ENCODE measurements at regions of chr12 and their contacts with region 1.

Region 1: GRCh38 chr12:47904713-47905310 is at the start of gene VDR:
- DNase-seq: peak; percentile 42 to 76 (median 64)
- ATAC-seq: peak; percentile 86
- H3K4me3 ChIP-seq: peak within 1 kb of the TSS; percentile 73
- H3K4me3 Mint-ChIP-seq: peak within 1 kb of the TSS; percentile 86 to 98 (median 94)
- H3K27ac ChIP-seq: peak within 1 kb of the TSS; percentile 44
- H3K27ac Mint-ChIP-seq: peak within 1 kb of the TSS; percentile 51 to 88 (median 74)
- H3K4me1 ChIP-seq: peaks cover 25 to 41% of the 10 kb centered on the region in 2 donors
- H3K4me1 Mint-ChIP-seq: peaks cover 35 to 57% (median 47%) of the 10 kb centered on the region in 7 donors
- H3K27me3 ChIP-seq: no peaks in the 10 kb centered on the region
- H3K27me3 Mint-ChIP-seq: peaks cover 0 to 34% (median 0%) of the 10 kb centered on the region in 5 donors
- total RNA-seq, gene VDR: 1.6 to 82.6 (median 2.9) TPM

Region 2: GRCh38 chr12:47085815-47086252 is 819.0 kb before region 1 on chr12:
- CTCF ChIA-PET with region 1: no interaction called
- POLR2A ChIA-PET with region 1: no interaction called
- intact Hi-C with region 1: loop called in 1 of 2 experiments (anchors 1 kb)
- DNase-seq: peak in 5 of 9 donors; percentile 26 to 54 (median 32)
- ATAC-seq: peak; percentile 85
- H3K4me3 ChIP-seq: peak overlapping the region; percentile 3
- H3K4me3 Mint-ChIP-seq: peak overlapping the region in 9 of 10 donors; percentile 8 to 85 (median 30)
- H3K27ac ChIP-seq: no peak overlapping the region
- H3K27ac Mint-ChIP-seq: peak overlapping the region; percentile 8 to 99 (median 81)
- H3K4me1 ChIP-seq: peaks cover 38 to 42% of the 10 kb centered on the region in 2 donors
- H3K4me1 Mint-ChIP-seq: peaks cover 42 to 74% (median 61%) of the 10 kb centered on the region in 7 donors
- H3K27me3 ChIP-seq: no peaks in the 10 kb centered on the region
- H3K27me3 Mint-ChIP-seq: no peaks in the 10 kb centered on the region

Region 3: DNA sequence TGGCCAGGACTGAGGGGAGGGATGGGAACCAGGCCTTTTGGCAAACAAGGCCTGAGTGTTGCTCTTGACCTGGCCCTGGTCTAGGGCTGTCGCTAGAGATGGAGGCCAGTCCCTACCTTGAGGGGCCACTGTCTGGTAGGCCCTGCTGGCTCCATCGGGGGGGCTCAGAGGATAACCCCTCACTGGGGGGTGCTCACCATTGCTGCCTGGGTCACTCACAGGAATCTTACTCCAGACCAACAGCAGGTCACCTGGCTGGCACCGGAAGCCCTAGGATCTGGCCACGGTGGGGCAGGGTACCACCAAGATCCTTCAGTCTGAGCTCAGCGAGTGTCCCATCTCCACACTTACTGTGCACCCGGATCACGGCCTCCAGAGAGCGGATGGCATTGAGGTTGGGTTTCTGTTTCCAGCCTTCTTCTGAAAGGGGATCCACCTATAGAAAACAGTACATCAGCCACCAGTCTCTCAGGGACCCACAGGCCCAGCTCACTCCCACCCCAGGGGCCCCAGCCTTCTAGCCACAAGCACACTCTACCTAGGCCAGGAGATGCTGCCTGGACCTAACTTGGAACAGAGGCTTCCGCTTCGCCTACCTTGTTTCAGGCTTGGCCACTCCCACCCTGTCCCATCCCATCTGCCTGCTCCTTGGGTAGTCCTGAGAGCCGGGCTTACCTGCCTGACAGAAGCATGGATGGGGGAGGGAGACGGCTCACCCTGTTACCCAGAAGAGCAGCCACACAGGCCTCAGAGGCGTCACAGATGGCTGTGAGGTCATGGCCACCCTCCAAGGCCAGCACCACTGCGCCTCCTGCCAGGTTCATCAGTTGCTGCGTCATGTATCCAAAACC is 119.6 kb before region 1 on chr12:
- CTCF ChIA-PET with region 1: no interaction called
- POLR2A ChIA-PET with region 1: no interaction called
- intact Hi-C with region 1: no loop called
- DNase-seq: no peak
- ATAC-seq: no peak
- H3K4me3 ChIP-seq: no peak overlapping the region
- H3K4me3 Mint-ChIP-seq: no peak overlapping the region
- H3K27ac ChIP-seq: no peak overlapping the region
- H3K27ac Mint-ChIP-seq: peak overlapping the region in 5 of 9 donors; percentile 31 to 82 (median 54)
- H3K4me1 ChIP-seq: no peaks in the 10 kb centered on the region
- H3K4me1 Mint-ChIP-seq: peaks cover 4 to 15% (median 6%) of the 10 kb centered on the region in 7 donors
- H3K27me3 ChIP-seq: no peaks in the 10 kb centered on the region
- H3K27me3 Mint-ChIP-seq: no peaks in the 10 kb centered on the region

Region 4: DNA sequence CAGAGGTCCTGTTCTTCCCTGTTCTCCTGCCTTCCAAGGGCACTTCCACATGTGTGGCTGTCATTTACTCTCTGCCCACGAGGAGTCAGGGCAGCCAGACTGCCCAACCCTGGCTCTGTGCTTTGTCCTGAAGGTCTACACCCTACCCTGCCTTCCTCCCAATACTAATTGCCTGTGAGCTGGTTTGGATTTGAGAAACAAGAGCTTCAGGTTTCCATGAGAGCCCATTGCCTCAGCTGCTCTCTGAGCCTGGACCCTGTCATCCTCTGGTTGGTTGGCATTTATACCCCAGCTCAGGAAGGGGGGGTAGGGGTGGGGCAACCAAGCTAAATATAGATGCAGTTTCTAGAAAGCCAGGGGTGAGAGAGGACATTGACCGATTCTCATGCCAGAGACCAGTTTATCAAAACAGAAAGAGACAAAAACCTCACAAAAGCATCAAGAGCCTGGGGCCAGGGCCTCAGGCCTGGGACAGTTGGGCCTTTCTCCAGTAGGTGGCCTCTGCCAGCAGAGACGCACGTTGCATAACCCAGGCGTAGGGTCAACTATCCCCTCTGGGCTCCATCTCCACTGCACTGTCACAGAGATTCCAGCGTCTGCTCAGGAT is 34.5 kb before region 1 on chr12:
- CTCF ChIA-PET with region 1: interaction called, 4 read pairs
- POLR2A ChIA-PET with region 1: no interaction called
- intact Hi-C with region 1: loop called in 1 of 2 experiments (anchors 2 kb)
- DNase-seq: no peak
- ATAC-seq: peak; percentile 51
- H3K4me3 ChIP-seq: no peak overlapping the region
- H3K4me3 Mint-ChIP-seq: peak overlapping the region in 1 of 10 donors; percentile 49
- H3K27ac ChIP-seq: no peak overlapping the region
- H3K27ac Mint-ChIP-seq: peak overlapping the region in 1 of 9 donors; percentile 84
- H3K4me1 ChIP-seq: no peaks in the 10 kb centered on the region
- H3K4me1 Mint-ChIP-seq: peaks cover 0 to 85% (median 0%) of the 10 kb centered on the region in 7 donors
- H3K27me3 ChIP-seq: no peaks in the 10 kb centered on the region
- H3K27me3 Mint-ChIP-seq: no peaks in the 10 kb centered on the region

Region 5: GRCh38 chr12:47882781-47883546 is 21.8 kb before region 1 on chr12:
- CTCF ChIA-PET with region 1: interaction called, 6 read pairs
- POLR2A ChIA-PET with region 1: interaction called, 13 read pairs
- intact Hi-C with region 1: loop called (anchors 1 kb)
- DNase-seq: peak in 7 of 9 donors; percentile 30 to 60 (median 55)
- ATAC-seq: peak; percentile 71
- H3K4me3 ChIP-seq: peak overlapping the region; percentile 73
- H3K4me3 Mint-ChIP-seq: peak overlapping the region; percentile 84 to 95 (median 90)
- H3K27ac ChIP-seq: peak overlapping the region; percentile 50
- H3K27ac Mint-ChIP-seq: peak overlapping the region; percentile 72 to 99 (median 95)
- H3K4me1 ChIP-seq: peaks cover 14 to 38% of the 10 kb centered on the region in 2 donors
- H3K4me1 Mint-ChIP-seq: peaks cover 33 to 82% (median 54%) of the 10 kb centered on the region in 7 donors
- H3K27me3 ChIP-seq: no peaks in the 10 kb centered on the region
- H3K27me3 Mint-ChIP-seq: no peaks in the 10 kb centered on the region

Region 6: DNA sequence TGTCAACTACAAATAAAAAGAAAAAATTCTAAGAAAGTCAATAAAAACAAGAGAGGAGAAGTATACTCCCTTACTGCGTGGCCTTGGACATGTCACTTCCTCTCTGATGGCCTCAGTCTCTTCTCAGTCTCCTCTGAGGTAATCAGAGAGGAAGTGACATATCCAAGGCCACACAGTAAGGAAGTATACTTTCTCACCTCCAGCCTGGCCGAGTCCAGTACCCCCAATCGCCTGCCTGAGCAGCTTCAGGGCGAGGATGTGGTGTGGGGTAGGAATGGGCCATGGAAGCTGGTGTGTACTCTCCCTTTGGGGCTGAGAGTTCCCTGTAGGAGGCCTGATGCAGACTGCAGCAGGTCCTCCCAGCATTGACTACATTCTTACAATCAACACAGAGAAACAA is 15.8 kb before region 1 on chr12:
- CTCF ChIA-PET with region 1: interaction called, 12 read pairs
- POLR2A ChIA-PET with region 1: interaction called, 13 read pairs
- intact Hi-C with region 1: loop called in 1 of 2 experiments (anchors 1 kb)
- DNase-seq: peak in 2 of 9 donors; percentile 21 to 46
- ATAC-seq: peak; percentile 87
- H3K4me3 ChIP-seq: no peak overlapping the region
- H3K4me3 Mint-ChIP-seq: peak overlapping the region in 1 of 10 donors; percentile 87
- H3K27ac ChIP-seq: no peak overlapping the region
- H3K27ac Mint-ChIP-seq: peak overlapping the region in 3 of 9 donors; percentile 12 to 99 (median 65)
- H3K4me1 ChIP-seq: peaks cover 6 to 22% of the 10 kb centered on the region in 2 donors
- H3K4me1 Mint-ChIP-seq: peaks cover 28 to 91% (median 45%) of the 10 kb centered on the region in 7 donors
- H3K27me3 ChIP-seq: no peaks in the 10 kb centered on the region
- H3K27me3 Mint-ChIP-seq: peaks cover 0 to 3% (median 0%) of the 10 kb centered on the region in 5 donors

Region 7: GRCh38 chr12:47894068-47894467 is 10.7 kb before region 1 on chr12:
- CTCF ChIA-PET with region 1: interaction called, 12 read pairs
- POLR2A ChIA-PET with region 1: no interaction called
- intact Hi-C with region 1: loop called in 1 of 2 experiments (anchors 1 kb)
- DNase-seq: no peak
- ATAC-seq: no peak
- H3K4me3 ChIP-seq: no peak overlapping the region
- H3K4me3 Mint-ChIP-seq: peak overlapping the region in 1 of 10 donors; percentile 61
- H3K27ac ChIP-seq: no peak overlapping the region
- H3K27ac Mint-ChIP-seq: peak overlapping the region in 1 of 9 donors; percentile 88
- H3K4me1 ChIP-seq: peaks cover 0 to 2% of the 10 kb centered on the region in 2 donors
- H3K4me1 Mint-ChIP-seq: peaks cover 17 to 97% (median 29%) of the 10 kb centered on the region in 7 donors
- H3K27me3 ChIP-seq: no peaks in the 10 kb centered on the region
- H3K27me3 Mint-ChIP-seq: peaks cover 0 to 3% (median 0%) of the 10 kb centered on the region in 5 donors

Region 8: DNA sequence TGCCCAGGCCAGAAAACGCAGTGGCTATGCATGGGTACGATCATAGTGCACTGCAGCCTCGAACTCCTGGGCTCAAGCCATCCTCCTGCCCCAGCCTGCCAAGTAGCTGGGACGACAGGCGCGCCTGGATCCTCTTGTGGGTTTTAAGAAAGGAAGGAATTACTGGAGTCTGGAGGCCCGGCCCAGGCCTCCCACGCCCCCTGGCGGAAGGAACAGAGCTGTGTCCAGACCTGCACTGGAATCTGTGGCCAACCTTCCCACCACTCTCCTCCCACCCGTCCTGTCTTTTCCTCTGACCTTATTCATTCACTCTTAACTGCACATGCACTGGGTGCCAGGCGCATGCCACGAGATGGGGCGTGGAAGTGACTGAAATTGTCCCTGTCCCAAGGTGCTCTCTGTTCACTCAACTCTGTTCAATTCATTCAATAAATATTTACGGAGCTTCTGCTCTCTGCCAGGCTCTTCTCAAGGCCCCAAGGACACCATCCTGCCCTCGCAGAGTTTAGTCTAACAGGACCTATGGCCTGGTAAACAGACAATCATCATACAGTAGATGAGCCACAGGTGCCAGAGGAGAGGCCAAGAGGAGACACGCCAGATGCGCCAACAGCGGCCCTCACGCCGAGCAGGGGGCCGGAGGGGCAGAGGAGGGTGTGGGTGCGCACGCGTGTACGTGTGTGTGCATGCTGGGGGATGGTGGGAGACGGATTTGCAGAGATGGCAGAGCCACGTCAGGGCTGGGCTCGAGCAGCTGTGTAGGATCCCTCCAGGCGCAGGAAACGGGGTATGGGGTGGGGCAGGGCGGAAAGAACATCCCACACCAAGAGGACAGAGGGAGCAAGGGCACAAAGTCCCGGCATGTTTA is 44.9 kb after region 1 on chr12:
- CTCF ChIA-PET with region 1: interaction called, 4 read pairs
- POLR2A ChIA-PET with region 1: no interaction called
- intact Hi-C with region 1: loop called (anchors 2 kb)
- DNase-seq: peak in 7 of 9 donors; percentile 22 to 67 (median 45)
- ATAC-seq: peak; percentile 72
- H3K4me3 ChIP-seq: no peak overlapping the region
- H3K4me3 Mint-ChIP-seq: no peak overlapping the region
- H3K27ac ChIP-seq: no peak overlapping the region
- H3K27ac Mint-ChIP-seq: peak overlapping the region in 1 of 9 donors; percentile 38
- H3K4me1 ChIP-seq: no peaks in the 10 kb centered on the region
- H3K4me1 Mint-ChIP-seq: peaks cover 0 to 18% (median 0%) of the 10 kb centered on the region in 7 donors
- H3K27me3 ChIP-seq: no peaks in the 10 kb centered on the region
- H3K27me3 Mint-ChIP-seq: peaks cover 4 to 13% (median 5%) of the 10 kb centered on the region in 5 donors

Region 9: DNA sequence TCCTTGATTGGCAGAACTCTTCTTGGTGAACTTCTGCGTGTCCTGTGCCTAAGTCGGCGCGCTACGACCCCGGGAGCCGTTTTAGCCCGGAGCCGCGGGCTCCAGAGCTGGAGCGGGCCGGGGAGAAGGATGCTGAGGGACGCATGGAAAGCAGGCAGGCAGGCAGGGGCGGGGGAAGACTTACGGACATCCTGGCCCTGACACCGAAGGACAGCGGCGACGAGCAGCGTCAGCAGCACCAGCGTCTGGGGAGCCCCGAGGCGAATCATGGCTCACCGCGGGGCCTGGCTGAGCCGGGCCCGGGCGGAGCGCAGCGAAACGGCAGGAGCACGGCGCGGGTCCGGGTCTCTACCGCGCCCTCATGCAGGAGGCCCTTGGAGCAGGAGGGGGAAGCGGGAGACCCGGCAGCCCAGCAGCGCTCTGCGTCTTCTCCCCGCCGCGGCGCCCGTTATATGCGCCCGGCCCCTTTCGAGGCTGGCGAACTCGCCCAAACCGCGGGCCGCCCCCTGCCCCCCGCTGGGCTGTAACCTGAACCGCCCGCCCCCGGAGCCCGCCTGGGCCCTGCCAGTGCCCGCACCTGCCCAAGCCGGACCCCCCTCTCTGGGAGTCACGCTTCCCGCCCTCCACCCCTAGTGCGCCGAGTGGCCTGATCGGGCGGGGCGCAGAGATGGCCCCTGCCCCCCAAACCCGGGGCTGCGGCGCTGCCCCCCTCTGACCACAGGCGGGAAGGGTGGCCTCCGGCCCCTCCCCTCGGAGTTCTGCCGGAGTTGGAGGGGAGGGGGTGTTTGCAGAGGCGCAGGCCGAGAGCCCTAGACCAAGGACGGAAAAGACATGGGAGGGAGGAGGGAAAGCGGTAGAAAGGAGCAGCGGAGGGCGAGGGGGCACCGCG is 99.5 kb after region 1 on chr12 and contains the start of gene COL2A1:
- CTCF ChIA-PET with region 1: no interaction called
- POLR2A ChIA-PET with region 1: no interaction called
- intact Hi-C with region 1: no loop called
- DNase-seq: peak in 4 of 9 donors; percentile 16 to 43 (median 24)
- ATAC-seq: peak; percentile 36
- H3K4me3 ChIP-seq: peak within 1 kb of the TSS; percentile 58
- H3K4me3 Mint-ChIP-seq: peak within 1 kb of the TSS; percentile 45 to 90 (median 80)
- H3K27ac ChIP-seq: no peak within 1 kb of the TSS
- H3K27ac Mint-ChIP-seq: no peak within 1 kb of the TSS
- H3K4me1 ChIP-seq: peaks cover 34 to 45% of the 10 kb centered on the region in 2 donors
- H3K4me1 Mint-ChIP-seq: peaks cover 21 to 43% (median 39%) of the 10 kb centered on the region in 7 donors
- H3K27me3 ChIP-seq: peaks cover 25 to 44% of the 10 kb centered on the region in 2 donors
- H3K27me3 Mint-ChIP-seq: peaks cover 82 to 96% (median 88%) of the 10 kb centered on the region in 5 donors
- total RNA-seq, gene COL2A1: not detected

Measured in naive thymus-derived CD4-positive, alpha-beta T cell (primary cell).